CD14-positive monocyte (primary cell): ENCODE measurements at regions of chr17 and their contacts with region 1.

Region 1: DNA sequence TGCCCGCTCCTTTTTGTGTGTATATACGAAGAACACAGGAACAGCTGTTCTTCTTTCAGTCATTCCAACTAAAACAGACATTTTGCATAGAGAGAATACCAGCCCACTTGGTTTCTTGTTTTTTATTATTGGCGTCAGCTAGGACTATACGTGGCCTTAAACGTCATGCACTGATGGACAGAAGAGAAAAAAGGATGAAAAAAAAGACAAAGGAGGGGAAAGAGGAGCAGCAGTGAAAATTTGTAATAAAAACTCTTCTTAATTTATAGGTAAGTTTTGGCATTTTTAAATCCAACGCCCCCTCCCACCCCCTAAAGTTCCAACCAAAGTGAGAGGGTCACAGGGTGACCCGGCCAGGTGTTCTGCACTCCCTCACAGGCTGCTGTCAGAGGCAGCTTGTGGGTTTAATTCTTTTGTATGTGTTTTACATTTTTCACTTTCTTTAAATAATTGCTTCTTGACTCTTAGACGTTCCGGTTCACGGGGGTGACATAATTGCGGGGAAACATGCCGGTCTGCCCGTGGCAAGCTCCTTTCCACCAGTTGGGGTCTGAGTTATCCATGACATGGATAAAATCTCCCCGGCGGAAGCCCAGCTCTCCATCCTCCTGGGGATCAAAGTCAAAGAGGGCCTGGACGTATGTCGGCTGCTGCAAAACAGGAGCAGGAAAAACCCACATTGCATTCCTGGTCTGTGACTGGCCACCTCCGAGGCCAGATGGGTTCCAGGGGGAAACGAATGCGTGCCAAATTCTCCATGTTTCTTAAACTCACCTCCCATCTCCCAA is 30.9 kb upstream of the SLC25A19 start:
- DNase-seq: no peak
- H3K4me3 ChIP-seq: no peak overlapping the region
- H3K4me3 Mint-ChIP-seq: no peak overlapping the region
- H3K27ac ChIP-seq: peak overlapping the region in 1 of 2 donors; percentile 100
- H3K27ac Mint-ChIP-seq: peak overlapping the region; percentile 11 to 63 (median 54)
- H3K4me1 ChIP-seq: peaks cover 56 to 65% of the 10 kb centered on the region in 2 donors
- H3K4me1 Mint-ChIP-seq: peaks cover 54% of the 10 kb centered on the region
- H3K27me3 ChIP-seq: no peaks in the 10 kb centered on the region
- H3K27me3 Mint-ChIP-seq: peaks cover 0 to 1% (median 0%) of the 10 kb centered on the region in 3 donors
- CTCF ChIP-seq: no peak

Region 2: GRCh38 chr17:75412455-75413317 is 92.6 kb after region 1 on chr17:
- intact Hi-C with region 1: loop called in 1 of 2 experiments (anchors 2 kb)
- DNase-seq: peak; percentile 57 to 74 (median 59)
- H3K4me3 ChIP-seq: peak overlapping the region in 1 of 3 experiments; percentile 57
- H3K4me3 Mint-ChIP-seq: peak overlapping the region; percentile 41 to 76
- H3K27ac ChIP-seq: no peak overlapping the region
- H3K27ac Mint-ChIP-seq: peak overlapping the region in 2 of 7 donors; percentile 25 to 37
- H3K4me1 ChIP-seq: peaks cover 6 to 12% of the 10 kb centered on the region in 2 donors
- H3K4me1 Mint-ChIP-seq: peaks cover 27% of the 10 kb centered on the region
- H3K27me3 ChIP-seq: no peaks in the 10 kb centered on the region
- H3K27me3 Mint-ChIP-seq: no peaks in the 10 kb centered on the region
- CTCF ChIP-seq: peak; percentile 80